HCT116 (cell line): ENCODE measurements at regions of chr12 and their contacts with region 1.

Region 1: GRCh38 chr12:100404769-100405407 is 48.0 kb downstream of the SLC17A8 start:
- DNase-seq: peak; percentile 84
- ATAC-seq: peak; percentile 98
- H3K4me3 ChIP-seq: no peak overlapping the region
- H3K27ac ChIP-seq: no peak overlapping the region
- H3K4me1 ChIP-seq: peaks cover 3 to 5% of the 10 kb centered on the region in 2 experiments; a peak in 3 of 4 replicates
- H3K27me3 ChIP-seq: no peaks in the 10 kb centered on the region
- CTCF ChIP-seq: peak; percentile 64 to 90 (median 88)
- POLR2A ChIP-seq: no peak
- RAD21 ChIP-seq: peak; percentile 76

Region 2: GRCh38 chr12:100114574-100114973 is 290.3 kb before region 1 on chr12:
- CTCF ChIA-PET with region 1: no interaction called
- POLR2A ChIA-PET with region 1: no interaction called
- RAD21 ChIA-PET with region 1: no interaction called
- intact Hi-C with region 1: loop called (anchors 10 kb)
- DNase-seq: no peak
- ATAC-seq: no peak
- H3K4me3 ChIP-seq: no peak overlapping the region
- H3K27ac ChIP-seq: no peak overlapping the region
- H3K4me1 ChIP-seq: no peaks in the 10 kb centered on the region
- H3K27me3 ChIP-seq: no peaks in the 10 kb centered on the region
- CTCF ChIP-seq: no peak
- POLR2A ChIP-seq: no peak
- RAD21 ChIP-seq: no peak

Region 3: DNA sequence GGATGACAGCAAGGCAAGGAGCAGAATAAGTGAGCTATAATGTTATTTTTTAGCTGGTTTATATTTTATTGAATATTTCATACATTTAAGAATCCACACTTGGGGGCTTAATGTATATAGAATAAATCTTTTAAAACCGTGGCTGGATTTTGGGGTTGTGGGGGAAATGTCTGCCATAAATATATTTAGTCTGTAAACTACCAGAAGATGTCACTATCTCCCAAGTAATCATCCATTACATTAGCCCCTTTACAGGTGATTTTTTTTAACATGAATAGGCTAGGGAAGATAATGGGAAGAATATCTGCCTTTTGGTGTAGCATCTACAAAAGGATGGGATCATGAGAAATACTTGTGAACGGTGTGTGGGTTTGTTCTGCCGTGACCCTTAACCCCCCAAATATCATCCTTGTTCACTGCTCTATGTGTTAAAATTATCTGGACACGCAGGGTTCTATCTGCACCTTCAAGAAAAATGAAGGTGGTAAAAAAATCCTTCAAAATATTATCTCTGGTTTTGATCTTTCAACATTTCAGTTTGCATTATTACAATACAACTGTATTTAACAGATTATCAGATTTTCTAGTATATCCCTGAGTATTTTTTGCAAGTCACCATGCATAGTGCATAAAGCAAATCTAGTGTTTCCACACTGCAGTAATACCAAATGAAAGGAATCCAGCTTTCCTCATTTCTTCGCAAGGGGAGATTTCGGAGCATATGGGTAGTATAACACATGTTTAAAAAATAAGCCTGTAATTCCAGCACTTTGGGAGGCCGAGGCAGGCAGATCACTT is 56.0 kb before region 1 on chr12:
- CTCF ChIA-PET with region 1: interaction called, 19 read pairs
- POLR2A ChIA-PET with region 1: no interaction called
- RAD21 ChIA-PET with region 1: interaction called, 3 to 4 read pairs
- intact Hi-C with region 1: no loop called
- DNase-seq: peak; percentile 33
- ATAC-seq: peak; percentile 76
- H3K4me3 ChIP-seq: no peak overlapping the region
- H3K27ac ChIP-seq: no peak overlapping the region
- H3K4me1 ChIP-seq: no peaks in the 10 kb centered on the region
- H3K27me3 ChIP-seq: peaks cover 3% of the 10 kb centered on the region; the same call in 1 of the 2 replicates
- CTCF ChIP-seq: peak; percentile 16 to 80 (median 57); a peak in 4 of 6 replicates
- POLR2A ChIP-seq: no peak
- RAD21 ChIP-seq: peak; percentile 81

Region 4: GRCh38 chr12:100388382-100388781 is 16.5 kb before region 1 on chr12:
- CTCF ChIA-PET with region 1: interaction called, 13 read pairs
- POLR2A ChIA-PET with region 1: interaction called, 3 read pairs
- RAD21 ChIA-PET with region 1: no interaction called
- intact Hi-C with region 1: no loop called
- DNase-seq: no peak
- ATAC-seq: no peak
- H3K4me3 ChIP-seq: no peak overlapping the region
- H3K27ac ChIP-seq: no peak overlapping the region
- H3K4me1 ChIP-seq: no peaks in the 10 kb centered on the region
- H3K27me3 ChIP-seq: no peaks in the 10 kb centered on the region
- CTCF ChIP-seq: no peak
- POLR2A ChIP-seq: no peak
- RAD21 ChIP-seq: no peak

Region 5: GRCh38 chr12:100489251-100489820 is 84.4 kb after region 1 on chr12:
- CTCF ChIA-PET with region 1: interaction called, 12 read pairs
- POLR2A ChIA-PET with region 1: no interaction called
- RAD21 ChIA-PET with region 1: no interaction called
- intact Hi-C with region 1: no loop called
- DNase-seq: no peak
- ATAC-seq: no peak
- H3K4me3 ChIP-seq: no peak overlapping the region
- H3K27ac ChIP-seq: no peak overlapping the region
- H3K4me1 ChIP-seq: no peaks in the 10 kb centered on the region
- H3K27me3 ChIP-seq: 0 out of 2 replicates have a peak, but pooled peaks cover 8% of the 10 kb centered on the region
- CTCF ChIP-seq: no peak
- POLR2A ChIP-seq: no peak
- RAD21 ChIP-seq: no peak

Region 6: GRCh38 chr12:100504804-100505203 is 99.9 kb after region 1 on chr12:
- CTCF ChIA-PET with region 1: no interaction called
- POLR2A ChIA-PET with region 1: no interaction called
- RAD21 ChIA-PET with region 1: no interaction called
- intact Hi-C with region 1: no loop called
- DNase-seq: no peak
- ATAC-seq: no peak
- H3K4me3 ChIP-seq: no peak overlapping the region
- H3K27ac ChIP-seq: no peak overlapping the region
- H3K4me1 ChIP-seq: no peaks in the 10 kb centered on the region
- H3K27me3 ChIP-seq: no peaks in the 10 kb centered on the region
- CTCF ChIP-seq: no peak
- POLR2A ChIP-seq: no peak
- RAD21 ChIP-seq: no peak